ENCODE measurements at regions of chr19 and their contacts with region 1.

Region 1: DNA sequence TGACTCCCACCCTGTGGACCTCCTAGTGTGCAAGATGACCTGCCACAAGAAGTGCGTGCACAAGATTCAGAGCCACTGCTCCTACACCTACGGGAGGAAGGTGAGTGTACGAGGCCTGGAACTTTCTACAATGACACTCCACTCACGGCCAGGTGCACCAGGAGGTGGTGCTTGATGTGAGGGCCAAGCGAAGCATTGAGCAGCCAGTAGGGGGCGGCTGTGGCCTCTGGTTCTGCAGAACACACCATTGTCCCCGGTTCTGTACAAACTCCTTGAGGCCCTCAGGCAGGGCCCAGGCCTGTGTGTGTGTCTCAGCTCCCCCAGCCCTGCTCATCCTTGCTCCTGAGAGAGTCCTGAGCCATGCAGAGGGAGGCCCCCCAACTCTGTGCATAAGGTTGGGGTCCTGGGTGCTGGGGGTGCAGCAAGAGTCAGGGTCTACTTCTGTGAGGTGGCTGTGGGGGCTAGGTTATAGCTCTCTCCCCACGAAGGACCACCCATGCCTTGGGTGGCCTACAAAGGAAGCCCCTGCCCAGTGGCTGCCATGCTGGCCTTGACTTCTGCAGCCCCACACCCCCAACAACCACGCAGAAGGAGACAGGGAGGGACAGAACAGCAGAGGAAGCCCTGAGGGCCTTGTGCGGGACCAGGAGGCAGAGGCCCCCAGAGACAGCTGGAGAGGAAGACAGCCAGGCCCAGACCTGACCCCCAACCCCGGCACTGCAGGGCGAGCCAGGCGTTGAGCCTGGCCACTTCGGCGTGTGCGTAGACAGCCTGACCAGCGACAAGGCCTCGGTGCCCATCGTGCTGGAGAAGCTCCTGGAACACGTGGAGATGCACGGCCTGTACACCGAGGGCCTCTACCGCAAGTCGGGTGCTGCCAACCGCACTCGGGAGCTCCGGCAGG is 9.7 kb upstream of the USE1 start:
- DNase-seq: peak in 9 of 10 donors; percentile 30 to 69 (median 66)
- H3K4me3 ChIP-seq: no peak overlapping the region
- H3K27ac ChIP-seq: peak overlapping the region in 1 of 59 donors; percentile 1
- H3K27me3 ChIP-seq: no peaks in the 10 kb centered on the region
- CTCF ChIP-seq: peak; percentile 24 to 80 (median 62)

Region 2: GRCh38 chr19:17170538-17171297 is 34.8 kb before region 1 on chr19:
- intact Hi-C with region 1: no loop called
- DNase-seq: no peak
- H3K4me3 ChIP-seq: no peak overlapping the region
- H3K27ac ChIP-seq: no peak overlapping the region
- H3K27me3 ChIP-seq: no peaks in the 10 kb centered on the region
- CTCF ChIP-seq: no peak

Region 3: GRCh38 chr19:17235618-17236377 is 30.3 kb after region 1 on chr19:
- intact Hi-C with region 1: no loop called
- DNase-seq: peak; percentile 52 to 89 (median 76)
- H3K4me3 ChIP-seq: peak overlapping the region; percentile 40 to 75 (median 63)
- H3K27ac ChIP-seq: peak overlapping the region in 55 of 59 donors; percentile 12 to 96 (median 80)
- H3K27me3 ChIP-seq: no peaks in the 10 kb centered on the region
- CTCF ChIP-seq: peak in 55 of 56 donors; percentile 23 to 85 (median 67)

Region 4: DNA sequence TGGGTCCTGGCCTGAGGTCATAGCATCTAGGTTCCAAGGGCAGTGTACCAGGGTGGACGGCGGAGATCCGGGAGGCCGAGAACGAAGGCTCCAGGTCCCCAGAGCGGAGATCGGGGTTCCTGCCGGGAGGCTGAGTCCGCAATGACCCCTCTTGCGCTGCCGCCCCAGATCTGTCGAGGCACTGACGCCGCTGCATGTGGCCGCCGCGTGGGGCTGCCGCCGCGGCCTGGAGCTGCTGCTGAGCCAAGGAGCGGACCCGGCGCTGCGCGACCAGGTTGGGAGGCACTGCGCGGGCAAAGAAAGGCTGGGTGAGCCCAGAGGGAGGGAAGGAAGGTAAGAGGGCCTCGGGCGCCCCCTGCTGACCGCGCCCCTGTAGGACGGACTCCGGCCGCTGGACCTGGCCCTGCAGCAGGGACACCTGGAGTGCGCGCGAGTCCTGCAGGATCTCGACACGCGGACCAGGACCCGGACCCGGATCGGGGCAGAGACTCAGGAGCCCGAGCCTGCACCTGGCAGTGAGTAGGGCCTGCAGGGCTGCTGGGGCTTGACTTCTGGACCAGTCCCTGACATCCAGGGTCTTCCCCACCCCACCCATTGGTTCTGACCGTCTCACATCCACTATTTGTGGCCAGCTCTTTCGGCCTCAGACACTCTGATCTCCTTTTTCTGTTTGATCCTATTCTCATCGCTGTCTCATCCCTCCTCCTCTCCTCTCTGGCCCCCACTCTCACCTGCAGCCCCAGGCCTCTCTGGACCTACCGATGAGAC is 77.2 kb after region 1 on chr19:
- intact Hi-C with region 1: loop called in 1 of 2 experiments (anchors 2 kb)
- DNase-seq: peak; percentile 68 to 87 (median 77)
- H3K4me3 ChIP-seq: peak overlapping the region; percentile 16 to 64 (median 48)
- H3K27ac ChIP-seq: no peak overlapping the region
- H3K27me3 ChIP-seq: peaks cover 0 to 12% (median 0%) of the 10 kb centered on the region in 45 donors
- CTCF ChIP-seq: peak; percentile 64 to 97 (median 92)

Measured in dorsolateral prefrontal cortex (tissue), 120 donors.